ENCODE measurements at regions of chr4 and their contacts with region 1.

Region 1: DNA sequence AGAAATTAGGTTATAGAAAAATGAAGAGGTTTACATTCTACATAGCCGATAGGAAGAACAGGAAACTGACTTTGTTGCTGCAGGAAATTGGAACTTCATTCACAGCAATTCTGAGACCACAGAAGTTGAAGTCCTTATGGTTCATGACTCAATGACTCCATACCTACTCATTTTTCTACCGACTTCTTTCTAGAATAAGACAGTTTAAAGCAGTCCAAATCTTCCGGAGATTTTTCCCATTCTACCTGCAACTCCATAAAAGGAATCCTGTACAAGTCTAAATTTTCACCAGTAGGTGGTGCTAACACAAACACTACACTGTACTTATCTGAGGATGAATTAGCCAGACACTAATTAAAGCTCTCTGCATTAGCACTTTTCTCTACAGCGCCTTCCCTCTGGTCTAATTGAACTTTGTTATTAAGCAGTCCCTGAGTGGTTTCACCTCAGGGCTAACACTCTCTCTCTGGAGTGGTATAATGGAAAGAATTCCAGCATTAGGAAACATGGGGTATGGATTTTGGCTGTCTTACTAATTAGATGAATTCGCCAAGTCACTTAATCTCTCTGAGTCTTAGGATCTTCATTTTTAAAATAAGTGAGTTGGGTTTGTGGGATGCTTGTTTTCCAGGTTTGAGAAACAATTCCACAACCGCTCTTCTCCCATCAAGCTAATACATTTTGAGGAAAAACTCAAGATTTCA is 167.9 kb downstream of the SMIM20 start:
- DNase-seq: peak in 2 of 5 donors; percentile 17 to 43
- H3K4me3 ChIP-seq: no peak overlapping the region
- H3K4me3 Mint-ChIP-seq: no peak overlapping the region
- H3K27ac ChIP-seq: no peak overlapping the region
- H3K27ac Mint-ChIP-seq: peak overlapping the region in 1 of 8 donors; percentile 30
- H3K4me1 ChIP-seq: no peaks in the 10 kb centered on the region
- H3K4me1 Mint-ChIP-seq: peaks cover 8 to 17% (median 13%) of the 10 kb centered on the region in 3 donors
- H3K27me3 ChIP-seq: no peaks in the 10 kb centered on the region
- H3K27me3 Mint-ChIP-seq: peaks cover 3 to 17% of the 10 kb centered on the region in 2 donors

Region 2: GRCh38 chr4:26093551-26093950 is 11.6 kb after region 1 on chr4:
- CTCF ChIA-PET with region 1: interaction called, 12 read pairs
- POLR2A ChIA-PET with region 1: no interaction called
- DNase-seq: no peak
- H3K4me3 ChIP-seq: no peak overlapping the region
- H3K4me3 Mint-ChIP-seq: peak overlapping the region in 1 of 7 donors; percentile 6
- H3K27ac ChIP-seq: no peak overlapping the region
- H3K27ac Mint-ChIP-seq: peak overlapping the region in 7 of 8 donors; percentile 24 to 90 (median 64)
- H3K4me1 ChIP-seq: peaks cover 2% of the 10 kb centered on the region
- H3K4me1 Mint-ChIP-seq: peaks cover 14 to 18% (median 16%) of the 10 kb centered on the region in 3 donors
- H3K27me3 ChIP-seq: no peaks in the 10 kb centered on the region
- H3K27me3 Mint-ChIP-seq: no peaks in the 10 kb centered on the region

Region 3: GRCh38 chr4:26325191-26325590 is 243.2 kb after region 1 on chr4:
- CTCF ChIA-PET with region 1: interaction called, 17 read pairs
- POLR2A ChIA-PET with region 1: no interaction called
- DNase-seq: peak in 3 of 5 donors; percentile 14 to 51 (median 42)
- H3K4me3 ChIP-seq: no peak overlapping the region
- H3K4me3 Mint-ChIP-seq: peak overlapping the region in 2 of 7 donors; percentile 26 to 62
- H3K27ac ChIP-seq: no peak overlapping the region
- H3K27ac Mint-ChIP-seq: peak overlapping the region in 6 of 8 donors; percentile 41 to 84 (median 61)
- H3K4me1 ChIP-seq: peaks cover 22% of the 10 kb centered on the region
- H3K4me1 Mint-ChIP-seq: peaks cover 39 to 51% (median 48%) of the 10 kb centered on the region in 3 donors
- H3K27me3 ChIP-seq: no peaks in the 10 kb centered on the region
- H3K27me3 Mint-ChIP-seq: peaks cover 0 to 1% of the 10 kb centered on the region in 2 donors

Region 4: DNA sequence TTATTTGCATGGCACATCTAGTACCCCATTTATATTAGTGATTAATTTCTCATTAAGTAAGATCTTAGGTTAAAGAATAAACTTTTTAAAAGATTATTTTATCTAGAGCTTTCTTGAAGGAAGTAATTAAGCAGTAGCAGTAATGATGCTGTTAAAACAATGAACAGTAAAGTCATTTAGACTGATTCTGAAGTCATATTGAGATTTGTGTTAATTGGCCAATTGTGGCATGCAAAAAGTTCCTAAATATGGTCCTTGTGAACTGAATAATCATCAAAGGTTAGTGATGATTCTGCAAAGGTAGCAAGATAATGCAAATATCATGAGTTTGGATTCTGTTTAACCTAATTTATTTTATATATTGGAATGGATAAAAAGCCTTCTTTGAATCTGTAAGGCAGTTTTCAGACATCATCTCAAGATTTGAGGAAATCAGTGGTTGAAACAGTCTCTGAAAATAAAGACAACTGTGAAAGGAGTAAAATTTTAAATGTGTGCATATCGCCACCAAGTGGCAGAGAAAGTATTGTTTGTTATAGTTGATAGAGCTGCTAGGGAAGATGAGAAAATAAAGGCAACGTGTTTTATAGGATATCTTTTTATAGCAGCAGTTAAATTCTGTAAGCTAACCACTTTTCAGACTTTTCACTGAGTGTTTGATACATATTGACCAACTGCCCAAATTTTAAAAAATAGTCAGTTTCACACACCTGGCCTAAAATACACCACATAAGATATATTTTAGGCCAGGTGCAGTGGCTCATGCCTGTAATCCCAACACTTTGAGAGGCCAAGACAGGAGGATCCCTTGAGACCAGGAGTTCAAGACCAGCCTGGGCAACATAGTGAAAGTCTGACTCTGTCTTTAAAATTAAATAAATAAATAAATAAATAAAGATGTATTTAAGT is 328.7 kb after region 1 on chr4:
- CTCF ChIA-PET with region 1: interaction called, 15 read pairs
- POLR2A ChIA-PET with region 1: no interaction called
- DNase-seq: peak in 3 of 5 donors; percentile 15 to 43 (median 35)
- H3K4me3 ChIP-seq: no peak overlapping the region
- H3K4me3 Mint-ChIP-seq: no peak overlapping the region
- H3K27ac ChIP-seq: no peak overlapping the region
- H3K27ac Mint-ChIP-seq: peak overlapping the region in 1 of 8 donors; percentile 14
- H3K4me1 ChIP-seq: no peaks in the 10 kb centered on the region
- H3K4me1 Mint-ChIP-seq: peaks cover 0 to 2% (median 0%) of the 10 kb centered on the region in 3 donors
- H3K27me3 ChIP-seq: no peaks in the 10 kb centered on the region
- H3K27me3 Mint-ChIP-seq: no peaks in the 10 kb centered on the region